K562 (cell line): ENCODE measurements at regions of chr22 and their contacts with region 1.

Region 1: DNA sequence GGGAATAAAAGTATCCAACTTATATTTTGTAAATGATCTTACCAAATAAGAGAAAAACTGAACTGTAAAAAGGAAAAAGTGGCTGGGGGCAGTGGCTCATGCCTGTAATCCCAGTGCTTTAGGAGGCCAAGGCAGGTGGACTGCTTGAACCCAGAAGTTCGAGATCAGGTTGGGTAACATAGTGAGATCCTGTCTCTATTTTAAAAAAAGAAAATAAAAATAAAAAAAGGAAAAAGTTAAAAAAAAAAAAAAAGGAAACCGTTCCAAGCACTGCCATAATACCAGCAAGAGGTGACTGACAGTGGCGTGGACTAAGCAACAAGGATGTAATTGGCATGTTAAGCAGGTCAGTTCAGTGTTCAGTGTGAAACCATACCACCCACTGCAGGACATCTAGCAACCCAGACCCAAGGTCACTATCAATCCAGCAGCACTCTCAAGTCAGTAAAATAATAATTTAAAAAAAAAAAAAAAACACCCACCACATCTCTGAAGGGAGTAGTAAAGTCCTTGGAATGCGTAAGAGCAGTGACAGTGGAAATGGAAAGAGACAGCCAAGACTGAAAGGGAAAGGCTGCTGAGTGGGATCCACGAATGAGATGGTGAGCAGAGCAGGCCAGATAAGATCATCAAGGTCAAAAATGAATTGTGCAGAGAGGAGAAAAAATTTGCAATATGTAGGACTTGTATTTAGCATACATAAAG is 43.6 kb downstream of the MAPK1 start:
- DNase-seq: peak; percentile 64 to 75 (median 68)
- ATAC-seq: peak; percentile 25
- H3K4me3 ChIP-seq: no peak overlapping the region
- H3K27ac ChIP-seq: peak overlapping the region; percentile 0; the same call in 1 of the 3 replicates
- H3K4me1 ChIP-seq: peaks cover 43 to 60% of the 10 kb centered on the region in 2 experiments
- H3K27me3 ChIP-seq: no peaks in the 10 kb centered on the region
- CTCF ChIP-seq: no peak
- EP300 ChIP-seq: no peak
- POLR2A ChIP-seq: no peak
- RAD21 ChIP-seq: no peak

Region 2: GRCh38 chr22:21802056-21802455 is 21.8 kb before region 1 on chr22:
- CTCF ChIA-PET with region 1: no interaction called
- POLR2A ChIA-PET with region 1: interaction called, 19 read pairs
- in situ Hi-C with region 1: no loop called
- intact Hi-C with region 1: no loop called
- DNase-seq: peak in 1 of 4 experiments; percentile 45
- ATAC-seq: no peak; the same call in 1 of the 3 replicates
- H3K4me3 ChIP-seq: no peak overlapping the region
- H3K27ac ChIP-seq: no peak overlapping the region
- H3K4me1 ChIP-seq: no peaks in the 10 kb centered on the region
- H3K27me3 ChIP-seq: no peaks in the 10 kb centered on the region
- CTCF ChIP-seq: no peak
- EP300 ChIP-seq: no peak
- POLR2A ChIP-seq: no peak
- RAD21 ChIP-seq: no peak

Region 3: DNA sequence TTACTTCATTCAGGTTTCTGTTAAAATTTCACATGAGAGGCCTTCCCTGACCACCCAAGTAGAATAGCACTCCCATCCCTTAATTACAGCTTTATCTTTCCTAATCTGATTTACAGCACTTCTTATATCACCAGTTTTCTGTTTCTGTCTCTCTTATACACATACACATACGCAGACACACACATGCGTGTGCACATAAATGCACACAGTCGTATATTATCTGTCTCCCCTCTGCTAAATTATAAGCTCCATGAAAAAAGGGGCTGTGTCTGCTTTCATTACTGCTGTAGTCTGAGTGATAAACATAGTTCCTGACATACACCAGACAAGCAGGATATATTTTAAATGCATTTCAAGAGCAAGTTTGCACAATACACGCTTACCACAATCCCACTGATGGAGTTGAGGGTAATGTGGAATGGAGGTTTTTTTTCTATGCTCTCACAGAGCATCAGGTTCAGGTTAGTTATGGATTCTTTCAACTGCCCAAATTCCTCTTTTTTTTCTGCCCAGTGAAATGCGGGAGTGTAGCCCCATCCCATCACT is 172.4 kb after region 1 on chr22:
- CTCF ChIA-PET with region 1: no interaction called
- POLR2A ChIA-PET with region 1: no interaction called
- in situ Hi-C with region 1: no loop called
- intact Hi-C with region 1: no loop called
- DNase-seq: no peak
- ATAC-seq: no peak
- H3K4me3 ChIP-seq: no peak overlapping the region
- H3K27ac ChIP-seq: no peak overlapping the region
- H3K4me1 ChIP-seq: peaks cover 9 to 22% of the 10 kb centered on the region in 2 experiments
- H3K27me3 ChIP-seq: no peaks in the 10 kb centered on the region
- CTCF ChIP-seq: no peak
- EP300 ChIP-seq: no peak
- POLR2A ChIP-seq: no peak
- RAD21 ChIP-seq: no peak